GM12878 (cell line): ENCODE measurements at regions of chr3 and their contacts with region 1.

Region 1: GRCh38 chr3:190064112-190064511 is 56.6 kb downstream of the P3H2 start:
- DNase-seq: no peak
- ATAC-seq: peak; percentile 39; the same call in 2 of the 3 replicates
- H3K4me3 ChIP-seq: no peak overlapping the region
- H3K27ac ChIP-seq: no peak overlapping the region
- H3K4me1 ChIP-seq: no peaks in the 10 kb centered on the region
- H3K27me3 ChIP-seq: no peaks in the 10 kb centered on the region
- CTCF ChIP-seq: no peak
- EP300 ChIP-seq: no peak
- POLR2A ChIP-seq: no peak
- RAD21 ChIP-seq: no peak

Region 2: DNA sequence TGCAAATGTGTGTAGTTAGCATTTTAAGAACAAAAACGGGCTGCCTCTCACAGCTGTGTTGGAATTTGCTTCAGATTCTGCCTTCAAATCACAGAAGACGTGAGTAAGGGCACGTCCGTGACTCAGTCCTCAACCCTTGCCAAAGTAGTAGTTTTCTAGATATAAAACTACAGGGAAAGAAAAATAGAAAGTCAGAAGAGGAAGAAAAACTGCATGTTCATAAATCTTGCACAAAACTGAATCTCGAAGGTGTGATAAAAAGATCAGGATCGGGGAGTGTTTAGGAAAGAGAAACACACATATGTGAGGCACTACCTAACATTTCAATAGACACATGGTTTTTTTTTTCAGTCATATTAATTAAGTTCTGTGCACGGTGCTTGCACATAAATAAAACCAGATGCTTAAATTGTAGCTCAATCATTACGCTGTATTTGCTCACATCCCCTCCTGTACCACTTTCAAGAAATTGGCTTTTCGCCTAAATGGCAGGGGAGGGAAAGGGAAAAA is 15.1 kb before region 1 on chr3:
- CTCF ChIA-PET with region 1: interaction called, 10 read pairs
- POLR2A ChIA-PET with region 1: interaction called, 5 read pairs
- RAD21 ChIA-PET with region 1: interaction called, 8 read pairs
- SMC1A ChIA-PET with region 1: interaction called, 21 read pairs
- in situ Hi-C with region 1: no loop called
- intact Hi-C with region 1: no loop called
- DNase-seq: no peak
- ATAC-seq: no peak
- H3K4me3 ChIP-seq: no peak overlapping the region
- H3K27ac ChIP-seq: no peak overlapping the region
- H3K4me1 ChIP-seq: no peaks in the 10 kb centered on the region
- H3K27me3 ChIP-seq: no peaks in the 10 kb centered on the region
- CTCF ChIP-seq: no peak
- EP300 ChIP-seq: no peak
- POLR2A ChIP-seq: no peak
- RAD21 ChIP-seq: no peak